CD4-positive, alpha-beta T cell (primary cell): ENCODE measurements at regions of chr7 and their contacts with region 1.

Region 1: GRCh38 chr7:17298207-17298839 is at the start of gene AHR:
- DNase-seq: peak; percentile 81 to 95 (median 86)
- ATAC-seq: peak; percentile 77
- H3K4me3 ChIP-seq: peak within 1 kb of the TSS; percentile 84
- H3K4me3 Mint-ChIP-seq: peak within 1 kb of the TSS; percentile 97
- H3K27ac ChIP-seq: peak within 1 kb of the TSS; percentile 74 to 91
- H3K27ac Mint-ChIP-seq: peak within 1 kb of the TSS; percentile 91
- H3K4me1 ChIP-seq: peaks cover 9% of the 10 kb centered on the region
- H3K4me1 Mint-ChIP-seq: peaks cover 39% of the 10 kb centered on the region
- H3K27me3 ChIP-seq: no peaks in the 10 kb centered on the region
- H3K27me3 Mint-ChIP-seq: no peaks in the 10 kb centered on the region
- CTCF ChIP-seq: no peak
- total RNA-seq, gene AHR: 95.2 to 95.7 TPM

Region 2: GRCh38 chr7:16652878-16653277 is 645.4 kb before region 1 on chr7:
- CTCF ChIA-PET with region 1: no interaction called
- POLR2A ChIA-PET with region 1: no interaction called
- intact Hi-C with region 1: loop called (anchors 5 kb)
- DNase-seq: no peak
- ATAC-seq: no peak
- H3K4me3 ChIP-seq: no peak overlapping the region
- H3K4me3 Mint-ChIP-seq: no peak overlapping the region
- H3K27ac ChIP-seq: no peak overlapping the region
- H3K27ac Mint-ChIP-seq: no peak overlapping the region
- H3K4me1 ChIP-seq: peaks cover 6% of the 10 kb centered on the region
- H3K4me1 Mint-ChIP-seq: peaks cover 79% of the 10 kb centered on the region
- H3K27me3 ChIP-seq: no peaks in the 10 kb centered on the region
- H3K27me3 Mint-ChIP-seq: no peaks in the 10 kb centered on the region
- CTCF ChIP-seq: no peak

Region 3: GRCh38 chr7:16989811-16990413 is 308.4 kb before region 1 on chr7:
- CTCF ChIA-PET with region 1: no interaction called
- POLR2A ChIA-PET with region 1: no interaction called
- intact Hi-C with region 1: no loop called
- DNase-seq: no peak
- ATAC-seq: no peak
- H3K4me3 ChIP-seq: no peak overlapping the region
- H3K4me3 Mint-ChIP-seq: no peak overlapping the region
- H3K27ac ChIP-seq: no peak overlapping the region
- H3K27ac Mint-ChIP-seq: no peak overlapping the region
- H3K4me1 ChIP-seq: no peaks in the 10 kb centered on the region
- H3K4me1 Mint-ChIP-seq: no peaks in the 10 kb centered on the region
- H3K27me3 ChIP-seq: no peaks in the 10 kb centered on the region
- H3K27me3 Mint-ChIP-seq: no peaks in the 10 kb centered on the region
- CTCF ChIP-seq: no peak

Region 4: GRCh38 chr7:17063045-17063383 is 235.3 kb before region 1 on chr7:
- CTCF ChIA-PET with region 1: no interaction called
- POLR2A ChIA-PET with region 1: interaction called, 6 read pairs
- intact Hi-C with region 1: loop called in 1 of 2 experiments (anchors 5 kb)
- DNase-seq: peak in 1 of 14 experiments; percentile 31
- ATAC-seq: no peak
- H3K4me3 ChIP-seq: no peak overlapping the region
- H3K4me3 Mint-ChIP-seq: no peak overlapping the region
- H3K27ac ChIP-seq: no peak overlapping the region
- H3K27ac Mint-ChIP-seq: no peak overlapping the region
- H3K4me1 ChIP-seq: no peaks in the 10 kb centered on the region
- H3K4me1 Mint-ChIP-seq: no peaks in the 10 kb centered on the region
- H3K27me3 ChIP-seq: no peaks in the 10 kb centered on the region
- H3K27me3 Mint-ChIP-seq: no peaks in the 10 kb centered on the region
- CTCF ChIP-seq: peak; percentile 49

Region 5: DNA sequence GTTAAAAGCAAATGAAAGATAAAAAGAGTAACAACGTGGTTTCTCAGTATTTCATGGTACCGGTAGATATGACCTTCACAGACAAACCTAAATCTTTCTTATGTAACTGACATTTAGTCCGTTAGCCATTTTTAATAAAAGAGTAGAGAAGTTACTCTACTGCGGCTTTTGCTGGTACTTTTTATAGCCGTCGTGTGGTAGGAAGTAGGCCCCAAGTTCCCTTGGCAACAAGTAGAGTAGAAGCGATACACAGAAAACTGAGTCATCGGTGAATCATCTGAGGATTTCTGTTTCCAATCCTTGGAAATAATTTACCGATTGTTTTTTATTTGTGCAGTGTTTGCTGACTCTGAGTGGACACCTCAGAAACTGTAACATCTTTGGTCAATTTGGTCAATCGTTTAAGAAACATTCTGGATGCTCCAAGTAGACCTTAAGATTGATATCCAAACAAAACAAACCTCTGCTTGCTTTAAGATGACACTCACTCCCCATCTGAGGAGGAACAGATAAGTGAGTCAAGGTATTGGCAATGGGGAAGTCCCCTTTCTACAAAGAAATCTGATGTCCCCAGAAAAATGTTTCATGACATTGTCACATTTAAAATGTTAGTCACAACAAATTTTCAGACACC is 63.8 kb before region 1 on chr7:
- CTCF ChIA-PET with region 1: interaction called, 3 read pairs
- POLR2A ChIA-PET with region 1: interaction called, 5 read pairs
- intact Hi-C with region 1: loop called (anchors 1 to 5 kb)
- DNase-seq: peak in 13 of 14 experiments; percentile 22 to 94 (median 56)
- ATAC-seq: peak; percentile 86
- H3K4me3 ChIP-seq: peak overlapping the region; percentile 31
- H3K4me3 Mint-ChIP-seq: peak overlapping the region; percentile 81
- H3K27ac ChIP-seq: peak overlapping the region; percentile 78 to 96
- H3K27ac Mint-ChIP-seq: peak overlapping the region; percentile 96
- H3K4me1 ChIP-seq: peaks cover 27% of the 10 kb centered on the region
- H3K4me1 Mint-ChIP-seq: peaks cover 46% of the 10 kb centered on the region
- H3K27me3 ChIP-seq: no peaks in the 10 kb centered on the region
- H3K27me3 Mint-ChIP-seq: no peaks in the 10 kb centered on the region
- CTCF ChIP-seq: no peak

Region 6: GRCh38 chr7:17269341-17270221 is 28.7 kb before region 1 on chr7:
- CTCF ChIA-PET with region 1: no interaction called
- POLR2A ChIA-PET with region 1: no interaction called
- intact Hi-C with region 1: no loop called
- DNase-seq: no peak
- ATAC-seq: no peak
- H3K4me3 ChIP-seq: no peak overlapping the region
- H3K4me3 Mint-ChIP-seq: no peak overlapping the region
- H3K27ac ChIP-seq: no peak overlapping the region
- H3K27ac Mint-ChIP-seq: no peak overlapping the region
- H3K4me1 ChIP-seq: peaks cover 1% of the 10 kb centered on the region
- H3K4me1 Mint-ChIP-seq: peaks cover 5% of the 10 kb centered on the region
- H3K27me3 ChIP-seq: no peaks in the 10 kb centered on the region
- H3K27me3 Mint-ChIP-seq: no peaks in the 10 kb centered on the region
- CTCF ChIP-seq: no peak

Region 7: DNA sequence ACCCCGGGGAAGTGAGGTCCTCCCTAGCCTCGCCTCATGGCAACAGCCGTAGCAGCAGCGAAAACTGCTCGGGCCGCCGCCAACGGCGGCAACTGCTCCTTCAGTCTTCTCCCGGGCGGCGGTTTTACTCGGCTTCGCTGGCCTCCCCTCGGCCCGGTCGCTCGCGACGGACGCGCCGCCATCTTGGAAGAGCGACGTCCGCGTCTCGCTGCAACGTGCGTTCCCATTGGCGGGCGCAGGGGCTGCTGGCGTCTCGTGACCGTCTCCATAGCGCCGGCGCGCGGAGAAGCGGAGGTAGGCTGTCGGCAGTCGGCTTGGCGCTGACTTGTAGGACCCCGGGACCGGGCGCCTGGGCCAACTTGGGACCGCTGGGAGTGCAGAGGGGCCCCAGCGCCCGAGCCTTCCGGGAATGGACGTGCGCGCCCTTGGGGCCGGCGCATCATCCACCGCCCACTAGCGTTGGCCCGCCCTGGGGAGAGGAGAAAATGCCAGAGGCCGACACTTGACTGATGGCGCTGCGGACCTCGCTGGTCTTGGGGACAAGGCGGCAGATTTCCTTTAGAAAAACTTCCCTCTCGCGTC is 642.1 kb after region 1 on chr7 and contains the start of gene SNX13:
- CTCF ChIA-PET with region 1: no interaction called
- POLR2A ChIA-PET with region 1: no interaction called
- intact Hi-C with region 1: loop called in 1 of 2 experiments (anchors 5 kb)
- DNase-seq: peak; percentile 80 to 96 (median 86)
- ATAC-seq: peak; percentile 95
- H3K4me3 ChIP-seq: peak within 1 kb of the TSS; percentile 89
- H3K4me3 Mint-ChIP-seq: peak within 1 kb of the TSS; percentile 99
- H3K27ac ChIP-seq: peak within 1 kb of the TSS; percentile 93 to 97
- H3K27ac Mint-ChIP-seq: peak within 1 kb of the TSS; percentile 98
- H3K4me1 ChIP-seq: peaks cover 19% of the 10 kb centered on the region
- H3K4me1 Mint-ChIP-seq: peaks cover 58% of the 10 kb centered on the region
- H3K27me3 ChIP-seq: no peaks in the 10 kb centered on the region
- H3K27me3 Mint-ChIP-seq: no peaks in the 10 kb centered on the region
- CTCF ChIP-seq: peak; percentile 33
- total RNA-seq, gene SNX13: 24.0 to 25.8 TPM